ENCODE measurements at regions of chrX and their contacts with region 1.

Region 1: GRCh38 chrX:15468036-15468435 is 25.1 kb downstream of the PIR start:
- DNase-seq: peak; percentile 35

Region 2: DNA sequence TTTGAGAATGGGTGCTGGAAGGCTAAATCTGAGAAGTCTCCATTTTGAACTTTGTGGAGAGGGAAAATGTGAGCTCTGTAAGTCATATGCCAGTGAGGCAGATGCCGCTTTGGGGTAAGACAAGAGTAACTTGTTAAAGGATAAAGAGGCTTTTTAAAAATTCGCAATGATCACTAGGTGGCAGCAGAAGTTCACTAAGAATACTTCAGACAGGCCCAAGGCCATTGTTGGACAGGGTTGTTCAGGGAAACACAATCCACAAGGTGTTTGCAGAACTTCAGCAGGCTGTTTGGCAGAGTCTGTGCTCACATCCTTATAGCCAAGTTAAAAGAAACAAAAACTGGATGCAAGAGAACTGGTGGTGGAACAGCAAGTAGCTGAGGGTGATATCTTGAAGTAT is 119.0 kb before region 1 on chrX:
- CTCF ChIA-PET with region 1: interaction called, 19 read pairs
- POLR2A ChIA-PET with region 1: no interaction called
- DNase-seq: peak; percentile 54

Region 3: GRCh38 chrX:15511563-15511962 is 43.5 kb after region 1 on chrX:
- CTCF ChIA-PET with region 1: no interaction called
- POLR2A ChIA-PET with region 1: no interaction called
- DNase-seq: no peak

Region 4: DNA sequence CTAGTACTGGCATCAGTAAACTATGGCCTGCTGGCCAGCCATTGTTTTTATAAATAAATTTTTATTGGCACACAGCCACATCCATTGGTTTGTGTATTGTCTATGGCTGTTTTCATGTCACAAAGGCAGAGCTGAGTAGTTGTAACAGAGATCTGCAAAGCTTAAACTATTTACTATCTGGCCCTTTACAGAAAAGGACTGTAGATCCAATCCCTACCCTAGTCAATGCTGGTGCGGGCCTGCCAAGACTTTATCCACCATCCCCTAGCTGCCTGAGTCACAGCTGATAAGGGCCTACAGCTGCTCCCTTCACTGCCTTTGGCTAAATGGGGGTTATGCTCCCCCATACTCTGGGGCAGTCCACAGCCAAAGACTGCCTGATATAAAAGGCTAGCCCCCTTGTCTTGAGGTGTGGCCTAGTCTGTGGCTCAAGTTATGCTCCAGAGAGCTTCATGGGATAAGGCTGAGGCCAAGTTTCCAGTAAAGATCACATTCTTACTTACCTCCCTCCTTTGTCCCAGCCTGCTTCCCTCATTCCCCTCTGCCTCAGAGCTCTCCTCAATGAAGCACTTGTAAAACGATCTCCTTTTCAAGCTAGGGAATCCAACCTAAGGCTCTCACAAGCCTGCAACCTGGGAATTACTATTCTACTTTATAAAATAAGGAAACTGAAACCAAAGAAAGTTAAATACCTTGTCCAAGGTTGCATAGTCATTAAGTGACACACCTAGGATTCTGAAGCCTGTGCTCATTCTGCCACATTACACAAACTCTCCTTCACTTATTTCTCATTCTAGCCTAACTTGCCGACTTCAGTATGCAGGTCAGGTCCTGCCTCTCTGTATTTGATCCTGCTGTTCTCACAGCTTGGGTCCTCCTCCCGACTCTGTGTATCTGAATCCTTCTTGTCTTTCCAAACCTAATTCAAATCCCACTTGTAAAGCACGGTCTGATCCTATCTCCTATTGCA is 112.0 kb after region 1 on chrX:
- CTCF ChIA-PET with region 1: no interaction called
- POLR2A ChIA-PET with region 1: no interaction called
- DNase-seq: no peak

Measured in HEK293T (cell line).